GM13976 (cell line): ENCODE measurements at regions of chr22 and their contacts with region 1.

Region 1: DNA sequence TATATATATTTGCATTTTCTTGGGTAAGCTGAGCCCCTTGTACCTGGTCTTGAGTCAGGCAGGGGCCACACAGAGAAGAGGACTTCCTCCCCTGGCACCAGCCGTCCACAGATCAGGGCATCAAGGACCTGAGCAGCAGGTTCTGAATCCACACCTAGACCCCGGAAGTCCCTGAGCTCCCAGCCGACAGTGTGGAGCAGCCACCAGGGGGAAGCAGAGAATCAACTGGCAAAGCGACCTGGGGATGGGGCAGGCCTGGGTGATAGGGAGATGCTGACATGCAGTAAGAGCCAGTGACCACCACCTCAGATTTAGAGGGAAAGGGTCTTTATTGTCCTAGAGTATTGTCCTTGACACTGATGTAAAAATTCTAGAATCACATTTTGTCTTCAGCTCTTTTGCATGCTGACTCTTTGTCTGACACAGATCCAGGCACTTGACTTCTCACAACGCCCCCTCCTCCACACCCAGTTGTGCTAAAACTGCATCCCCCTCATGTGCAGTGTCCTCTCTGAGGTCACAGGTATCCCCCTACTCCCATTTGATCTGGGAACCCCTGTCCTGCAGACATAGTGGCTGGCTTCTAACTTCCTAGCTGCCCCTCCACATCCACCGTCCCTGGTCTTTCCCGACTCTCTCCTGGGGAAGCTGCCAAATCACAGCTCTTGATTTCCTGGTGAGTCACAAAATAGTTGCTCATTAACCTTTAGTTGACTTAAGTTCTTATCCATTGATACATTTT is 109.3 kb downstream of the GGTLC2 start:
- DNase-seq: peak; percentile 88
- CTCF ChIP-seq: peak; percentile 90

Region 2: GRCh38 chr22:22702237-22703202 is 51.2 kb before region 1 on chr22:
- in situ Hi-C with region 1: loop called (anchors 10 kb)
- DNase-seq: no peak
- CTCF ChIP-seq: peak; percentile 70

Region 3: GRCh38 chr22:22810018-22810427 is 56.3 kb after region 1 on chr22:
- in situ Hi-C with region 1: loop called (anchors 10 kb)
- DNase-seq: peak; percentile 57
- CTCF ChIP-seq: peak; percentile 70